Activated T-helper 1 cell treated with anti-CD3 and anti-CD28 coated beads, Interleukin-12 subunit alpha, Interleukin-12 subunit beta, Interleukin-2, Interleukin-4 antibody, amounts not matched to agents 30 ng/mL and 10 ng/mL and 1 ng/mL, durations not matched to agents 14 hours and 24 hours and 36 hours (primary cell): ENCODE measurements at regions of chr10 and their contacts with region 1.

Region 1: DNA sequence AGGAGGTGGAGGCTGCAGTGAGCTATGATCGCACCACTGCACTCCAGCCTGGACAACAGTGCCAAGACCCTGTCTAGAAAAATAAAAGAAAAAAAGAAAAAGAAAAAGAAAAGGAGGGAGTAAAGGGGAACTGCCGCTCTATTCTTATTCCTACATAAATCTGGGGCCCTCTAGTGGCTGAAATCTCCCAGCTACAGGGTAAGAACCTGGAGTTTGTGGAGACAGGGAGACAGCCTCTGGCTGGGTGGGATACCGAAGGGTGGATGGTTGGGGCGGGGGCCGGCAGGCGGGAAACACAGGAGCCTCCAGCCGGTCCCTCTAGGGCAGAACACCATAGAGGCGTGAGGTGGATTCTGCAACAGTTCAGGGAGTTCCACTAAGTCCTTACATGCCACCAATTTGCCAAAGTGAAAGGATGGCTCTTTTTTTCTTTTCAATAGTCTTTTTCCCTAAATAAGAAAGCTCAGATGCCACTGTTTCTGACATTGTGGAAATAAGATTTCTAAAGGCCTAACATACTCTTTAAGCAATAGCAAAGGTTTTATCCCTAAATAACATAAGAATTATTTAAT is 117.3 kb downstream of the SVIL start:
- DNase-seq: no peak
- H3K4me3 Mint-ChIP-seq: no peak overlapping the region
- H3K27ac Mint-ChIP-seq: no peak overlapping the region
- H3K4me1 Mint-ChIP-seq: peaks cover under 1% of the 10 kb centered on the region
- H3K27me3 Mint-ChIP-seq: no peaks in the 10 kb centered on the region

Region 2: DNA sequence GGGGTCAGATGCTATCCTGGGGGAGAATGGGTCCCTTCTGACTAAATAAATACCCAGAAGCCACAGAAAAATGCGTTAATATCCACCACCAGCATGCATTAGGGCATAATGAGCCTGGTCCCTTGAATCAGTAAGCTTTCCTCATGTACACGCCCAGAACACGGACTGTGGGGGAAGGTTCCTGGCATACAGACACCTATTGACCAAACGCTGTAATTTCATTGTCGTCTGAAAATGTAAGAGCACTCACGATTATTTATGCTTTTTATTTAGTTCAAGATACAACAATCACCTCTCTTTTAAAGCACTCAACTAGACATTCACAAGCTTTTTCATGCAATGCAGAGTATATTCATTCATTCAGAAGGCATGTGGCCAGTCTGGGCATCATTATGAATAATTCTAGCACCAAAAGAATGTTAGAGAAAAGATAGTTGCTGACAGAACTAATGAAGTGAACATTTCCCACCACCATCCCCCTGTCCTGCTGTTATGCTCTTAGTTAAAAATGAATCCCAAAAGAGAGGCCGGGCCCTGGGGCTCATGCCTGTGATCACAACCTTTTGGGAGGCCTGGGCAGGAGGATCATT is 16.4 kb after region 1 on chr10:
- intact Hi-C with region 1: no loop called
- DNase-seq: no peak
- H3K4me3 Mint-ChIP-seq: no peak overlapping the region
- H3K27ac Mint-ChIP-seq: no peak overlapping the region
- H3K4me1 Mint-ChIP-seq: no peaks in the 10 kb centered on the region
- H3K27me3 Mint-ChIP-seq: no peaks in the 10 kb centered on the region

Region 3: GRCh38 chr10:29590915-29591650 is 73.6 kb after region 1 on chr10:
- intact Hi-C with region 1: loop called (anchors 2 kb)
- DNase-seq: no peak
- H3K4me3 Mint-ChIP-seq: no peak overlapping the region
- H3K27ac Mint-ChIP-seq: no peak overlapping the region
- H3K4me1 Mint-ChIP-seq: peaks cover 9% of the 10 kb centered on the region
- H3K27me3 Mint-ChIP-seq: peaks cover 5% of the 10 kb centered on the region

Region 4: DNA sequence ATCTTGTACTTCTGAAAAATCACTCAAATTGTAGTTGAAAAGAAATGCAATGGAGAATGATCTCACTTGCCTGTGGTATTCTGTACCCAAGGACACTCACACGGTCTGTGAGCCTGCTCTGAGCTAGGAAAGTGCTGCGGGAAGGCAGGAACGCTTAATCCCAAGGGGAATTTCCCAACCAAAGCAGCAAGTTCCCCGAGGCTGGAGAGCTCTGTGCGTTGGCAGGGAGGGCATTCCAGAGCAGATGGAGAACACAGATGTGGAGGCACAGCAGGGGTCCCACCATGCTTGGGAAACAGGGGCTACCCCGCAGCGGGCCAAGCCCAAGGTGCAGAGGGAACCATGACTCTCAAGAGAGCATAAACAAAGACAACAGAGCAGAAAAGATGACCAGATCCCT is 103.7 kb after region 1 on chr10:
- intact Hi-C with region 1: no loop called
- DNase-seq: no peak
- H3K4me3 Mint-ChIP-seq: no peak overlapping the region
- H3K27ac Mint-ChIP-seq: no peak overlapping the region
- H3K4me1 Mint-ChIP-seq: no peaks in the 10 kb centered on the region
- H3K27me3 Mint-ChIP-seq: no peaks in the 10 kb centered on the region